ENCODE measurements at regions of chr3 and their contacts with region 1.

Region 1: DNA sequence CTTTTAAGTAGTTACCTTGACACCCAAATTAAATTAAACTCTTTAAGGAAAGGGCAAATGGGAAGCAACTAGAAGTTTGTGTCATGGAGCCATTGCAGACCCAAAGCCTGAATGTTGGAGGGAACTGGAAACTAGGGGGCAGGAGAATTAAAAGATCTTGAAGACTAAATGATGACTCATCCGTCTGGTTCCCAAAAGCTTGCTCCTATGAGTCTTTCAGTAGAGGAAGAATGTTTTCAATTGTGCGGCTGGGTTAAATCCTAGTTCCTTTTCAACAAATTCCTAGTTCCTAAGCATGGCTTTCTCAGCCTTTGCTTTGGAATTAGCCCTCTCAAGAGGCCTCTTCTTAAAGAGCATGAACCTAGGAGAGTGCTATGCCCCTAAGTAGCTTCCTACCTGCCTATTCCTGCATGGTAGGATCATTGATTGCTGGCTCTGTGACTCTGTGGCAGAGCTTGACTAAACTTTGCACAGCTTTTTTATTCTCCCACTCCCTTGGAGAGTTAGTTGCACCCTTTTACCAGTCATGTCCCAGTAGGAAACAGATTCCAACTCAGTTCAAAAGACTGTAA is 17.7 kb downstream of the CLEC3B start:
- DNase-seq: no peak

Region 2: DNA sequence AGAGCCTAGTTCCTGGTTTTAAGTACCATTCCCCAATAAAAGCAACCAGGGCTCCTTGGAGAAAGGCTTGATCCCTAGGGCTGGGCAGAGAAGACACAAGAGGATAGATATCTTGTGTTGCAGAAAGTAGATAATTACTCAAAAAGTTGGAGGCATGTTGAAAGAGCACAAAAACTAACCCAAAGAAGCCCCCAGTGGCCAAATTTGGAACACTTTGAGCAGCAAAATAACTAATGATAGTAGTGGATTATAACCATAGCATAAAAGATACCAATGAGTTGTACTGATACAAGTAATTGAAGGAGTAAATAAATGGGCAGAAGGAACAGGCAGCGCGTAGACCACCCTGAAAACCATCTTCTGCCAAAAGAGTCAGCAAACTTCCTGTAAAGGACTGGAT is 55.7 kb before region 1 on chr3:
- intact Hi-C with region 1: no loop called
- DNase-seq: no peak

Region 3: DNA sequence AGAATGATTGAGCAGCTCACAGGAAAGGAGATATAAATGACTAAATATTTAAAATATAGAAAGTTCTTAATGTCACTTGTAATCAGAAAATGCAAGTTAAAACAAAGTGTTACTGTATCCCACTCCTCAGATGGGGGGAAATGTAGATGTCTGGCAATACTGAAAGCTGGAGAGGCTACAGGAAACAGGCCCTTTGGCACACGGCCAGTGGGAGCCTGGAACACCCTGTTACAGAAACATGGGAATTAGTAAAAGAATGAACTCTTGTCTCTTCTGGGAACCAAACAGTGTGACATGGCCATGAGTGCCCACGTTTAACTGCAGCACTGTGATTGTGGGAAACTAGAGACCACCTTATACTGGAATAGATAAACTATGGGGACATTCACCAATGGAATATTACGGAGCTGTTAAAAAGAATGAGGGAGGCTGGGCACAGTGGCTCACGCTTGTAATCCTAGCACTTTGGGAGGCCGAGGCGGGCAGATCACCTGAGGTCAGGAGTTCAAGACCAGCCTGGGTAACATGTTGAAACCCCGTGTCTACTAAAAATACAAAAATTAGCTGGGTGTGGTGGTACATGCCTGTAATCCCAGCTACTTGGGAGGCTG is 52.2 kb after region 1 on chr3:
- intact Hi-C with region 1: loop called in 1 of 2 experiments (anchors 2 kb)
- DNase-seq: no peak

Region 4: DNA sequence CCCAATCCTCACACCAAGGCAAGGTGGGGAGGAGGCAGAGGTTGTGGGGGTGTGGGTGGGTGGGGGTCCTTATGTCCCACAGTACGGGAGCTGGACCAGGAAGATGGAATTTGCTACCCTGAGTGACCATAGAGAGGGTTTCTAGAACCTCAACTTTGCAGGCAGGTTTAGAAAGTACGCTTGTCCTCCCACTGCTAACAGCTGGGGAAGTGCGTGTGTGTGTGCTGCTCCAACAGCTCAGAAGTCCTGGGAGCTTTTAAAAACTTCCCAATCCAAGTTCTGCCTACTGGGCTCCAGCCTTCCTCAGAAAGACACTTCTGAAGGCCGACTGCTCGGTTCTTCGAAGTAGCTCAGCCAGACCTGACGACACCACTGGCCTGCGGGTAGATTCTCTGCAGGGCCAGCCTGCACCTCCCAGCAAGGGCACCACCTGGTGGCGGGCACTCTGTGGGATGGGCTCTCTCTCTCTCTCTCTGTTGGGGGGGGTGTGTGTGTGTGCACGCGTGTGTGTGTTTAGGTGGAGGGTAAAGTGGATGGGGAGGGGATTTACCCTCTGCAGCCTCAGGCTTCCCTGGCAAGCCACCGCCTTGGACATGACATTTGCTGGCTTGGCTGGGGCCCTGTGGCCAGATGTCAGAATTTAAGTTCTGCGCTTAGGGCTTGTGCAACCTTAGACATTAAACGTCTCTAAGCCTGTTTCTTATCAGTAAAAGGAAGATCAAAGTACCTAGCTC is 166.7 kb after region 1 on chr3:
- intact Hi-C with region 1: loop called (anchors 5 to 10 kb)
- DNase-seq: peak; percentile 95

Region 5: DNA sequence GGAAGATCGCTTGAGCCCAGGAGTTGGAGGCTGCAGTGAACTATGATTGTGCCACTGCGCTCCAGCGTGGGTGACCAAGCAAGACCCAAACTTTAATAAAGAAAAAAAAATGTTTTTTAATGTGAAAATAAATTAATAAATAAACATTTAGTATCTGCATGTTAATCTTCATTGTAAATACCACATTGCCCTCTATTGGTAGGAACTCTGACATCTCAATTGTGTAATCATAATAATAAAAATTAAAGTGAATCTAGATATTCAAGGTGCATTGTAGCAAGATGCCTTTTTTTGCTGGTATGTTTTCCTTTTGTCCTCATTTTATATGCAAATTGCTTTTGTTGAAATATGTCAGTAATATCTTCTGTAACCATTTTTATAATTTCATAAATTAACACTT is 455.7 kb after region 1 on chr3:
- intact Hi-C with region 1: loop called (anchors 5 kb)
- DNase-seq: no peak